Panc1 (cell line): ENCODE measurements at regions of chr17 and their contacts with region 1.

Region 1: GRCh38 chr17:76547184-76547641 is 7.4 kb downstream of the PRCD start:
- DNase-seq: no peak
- ATAC-seq: peak; percentile 86
- H3K4me3 ChIP-seq: no peak overlapping the region
- H3K27ac ChIP-seq: peak overlapping the region; percentile 36; the same call in 1 of the 2 replicates
- H3K4me1 ChIP-seq: peaks cover 32% of the 10 kb centered on the region
- H3K27me3 ChIP-seq: no peaks in the 10 kb centered on the region
- CTCF ChIP-seq: peak; percentile 92

Region 2: GRCh38 chr17:76246080-76247066 is 300.8 kb before region 1 on chr17:
- CTCF ChIA-PET with region 1: no interaction called
- POLR2A ChIA-PET with region 1: no interaction called
- in situ Hi-C with region 1: no loop called
- intact Hi-C with region 1: no loop called
- DNase-seq: no peak
- ATAC-seq: peak; percentile 44; the same call in 1 of the 2 replicates
- H3K4me3 ChIP-seq: no peak overlapping the region
- H3K27ac ChIP-seq: no peak overlapping the region
- H3K4me1 ChIP-seq: no peaks in the 10 kb centered on the region; the same call in 1 of the 2 replicates
- H3K27me3 ChIP-seq: peaks cover 2% of the 10 kb centered on the region; the same call in 1 of the 2 replicates
- CTCF ChIP-seq: no peak

Region 3: DNA sequence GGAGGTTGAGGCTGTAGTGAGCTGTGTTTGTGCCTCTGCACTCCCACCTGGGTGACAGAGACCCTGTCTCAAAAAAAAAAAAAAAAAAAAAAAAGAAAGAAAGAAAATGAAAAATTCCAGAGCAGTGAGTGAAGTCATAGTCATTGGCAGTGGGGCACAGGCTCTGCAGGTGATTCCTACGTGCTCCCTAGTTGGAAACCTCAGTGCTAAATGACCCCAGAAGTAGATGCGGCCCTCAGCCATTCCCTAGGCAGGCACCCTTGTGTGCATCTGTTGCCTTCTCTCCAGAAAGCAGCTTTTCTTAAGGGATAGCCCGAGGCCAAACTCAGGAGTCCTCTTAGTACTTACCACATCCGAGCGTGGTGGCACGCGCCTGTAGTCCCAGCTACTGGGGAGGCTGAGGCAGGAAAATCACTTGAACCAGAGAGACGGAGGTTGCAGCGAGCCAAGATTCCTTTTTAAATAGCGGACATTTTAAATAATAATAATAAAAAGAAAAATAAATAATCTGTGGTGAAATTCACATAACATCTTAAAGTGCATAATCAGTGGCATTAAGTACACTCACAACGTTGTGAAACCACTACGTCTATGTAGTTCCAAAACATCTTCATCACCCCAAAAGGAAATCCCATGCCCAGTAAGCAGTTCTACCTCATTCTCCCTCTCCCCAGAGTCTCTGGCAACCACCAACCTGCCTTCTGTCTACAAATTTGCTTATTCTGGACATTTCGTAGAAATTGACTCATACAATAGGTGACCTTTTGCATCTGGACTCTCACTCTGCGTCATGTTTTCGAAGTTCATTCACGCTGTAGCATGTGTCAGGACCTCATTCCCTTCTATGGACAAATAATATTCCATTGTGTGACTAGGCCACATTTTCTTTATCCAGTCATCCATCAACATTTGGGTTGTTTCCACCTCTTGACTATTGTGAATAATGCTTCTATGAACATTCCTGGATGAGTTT is 175.3 kb before region 1 on chr17:
- CTCF ChIA-PET with region 1: no interaction called
- POLR2A ChIA-PET with region 1: no interaction called
- in situ Hi-C with region 1: no loop called
- intact Hi-C with region 1: no loop called
- DNase-seq: no peak
- ATAC-seq: no peak
- H3K4me3 ChIP-seq: no peak overlapping the region
- H3K27ac ChIP-seq: no peak overlapping the region
- H3K4me1 ChIP-seq: no peaks in the 10 kb centered on the region
- H3K27me3 ChIP-seq: no peaks in the 10 kb centered on the region
- CTCF ChIP-seq: no peak

Region 4: DNA sequence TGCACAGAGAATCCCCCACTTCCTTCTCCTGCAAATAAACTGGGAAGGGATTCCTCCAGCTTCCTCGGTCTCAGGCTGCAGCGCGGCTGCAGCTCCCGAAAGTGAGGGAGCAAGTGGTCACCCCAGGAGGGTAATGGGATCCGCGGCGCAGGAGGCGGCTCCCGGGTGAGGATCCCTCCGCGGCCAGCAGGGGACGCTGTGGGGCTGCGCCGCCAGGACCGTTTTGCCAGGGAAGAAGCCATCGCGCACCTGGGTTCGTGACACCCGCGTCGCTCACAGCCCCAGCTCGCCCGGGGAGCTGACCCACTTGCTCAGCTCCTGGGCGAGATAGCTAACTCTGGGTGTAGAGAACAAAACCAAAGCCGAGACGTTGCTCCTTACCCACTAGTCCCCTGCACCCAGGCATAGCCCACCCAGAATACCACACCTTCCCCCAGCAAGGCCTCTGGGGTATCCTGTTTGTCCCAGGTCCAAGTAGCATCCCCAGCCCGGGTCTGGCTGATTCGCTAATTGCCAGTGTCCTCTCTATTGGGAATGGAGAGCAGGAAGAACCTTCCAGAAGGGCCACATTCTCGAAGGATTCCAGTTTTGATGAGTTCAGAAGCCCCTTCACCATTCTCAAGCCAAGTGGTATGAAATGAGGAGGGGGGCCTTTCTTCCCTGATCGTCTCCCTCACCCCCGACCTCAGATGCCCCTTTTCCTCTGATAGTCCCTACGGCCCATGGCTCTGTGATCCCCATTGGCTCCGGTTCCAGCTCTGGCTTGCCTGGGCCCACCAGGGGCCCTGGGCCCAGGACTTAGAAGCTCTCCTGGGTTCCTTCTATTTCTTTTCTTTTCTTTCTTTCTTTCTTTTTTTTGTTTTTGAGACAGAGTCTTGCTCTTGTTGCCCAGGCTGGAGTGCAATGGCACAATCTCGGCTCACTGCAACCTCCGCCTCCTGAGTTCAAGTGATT is 23.9 kb before region 1 on chr17:
- CTCF ChIA-PET with region 1: interaction called, 11 read pairs
- POLR2A ChIA-PET with region 1: interaction called, 4 read pairs
- in situ Hi-C with region 1: no loop called
- intact Hi-C with region 1: loop called (anchors 1 kb)
- DNase-seq: peak; percentile 46
- ATAC-seq: peak; percentile 85
- H3K4me3 ChIP-seq: peak overlapping the region in 1 of 2 experiments; percentile 17; a peak in 1 of 4 replicates
- H3K27ac ChIP-seq: no peak overlapping the region
- H3K4me1 ChIP-seq: peaks cover 19% of the 10 kb centered on the region
- H3K27me3 ChIP-seq: no peaks in the 10 kb centered on the region
- CTCF ChIP-seq: peak; percentile 100

Region 5: DNA sequence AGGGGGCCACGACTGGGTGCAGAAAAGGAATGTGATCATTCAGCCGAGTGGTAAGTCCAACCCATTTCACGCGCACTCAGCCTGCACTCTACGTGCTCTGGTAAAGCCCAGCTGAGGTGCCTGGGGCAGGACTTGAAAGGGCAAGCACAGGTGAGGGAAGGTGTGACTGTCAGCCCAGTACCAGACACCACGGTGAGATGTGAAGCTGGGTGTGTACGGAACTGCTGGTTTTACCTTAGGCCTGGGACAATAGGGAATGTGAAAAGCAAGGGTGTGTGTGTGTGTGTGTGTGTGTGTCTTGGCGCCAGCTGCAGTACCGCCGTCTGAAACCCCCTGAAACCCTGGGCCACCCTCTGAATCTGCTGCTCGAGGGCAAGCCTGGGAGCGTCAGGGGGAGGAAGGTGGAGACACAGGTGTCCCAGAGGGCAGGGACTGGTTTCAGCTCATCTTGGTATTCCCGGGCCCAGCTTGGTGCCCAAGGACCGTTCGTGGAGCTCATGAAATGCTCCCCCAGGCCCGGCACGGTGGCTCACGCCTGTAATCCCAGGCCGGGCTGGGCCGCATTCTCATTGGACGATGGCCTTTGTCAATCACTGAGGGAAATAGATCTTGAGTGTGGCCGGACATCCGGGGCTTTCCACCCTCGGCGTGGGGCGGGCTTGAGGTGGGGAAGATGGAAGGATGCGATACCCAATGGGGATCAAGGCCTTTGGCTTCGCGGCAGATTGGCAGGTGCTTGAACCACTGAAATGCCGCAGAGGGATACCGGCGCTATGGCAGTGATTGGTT is 124.1 kb after region 1 on chr17:
- CTCF ChIA-PET with region 1: interaction called, 10 read pairs
- POLR2A ChIA-PET with region 1: no interaction called
- in situ Hi-C with region 1: no loop called
- intact Hi-C with region 1: no loop called
- DNase-seq: peak; percentile 97
- ATAC-seq: peak; percentile 99
- H3K4me3 ChIP-seq: peak overlapping the region; percentile 82 to 94
- H3K27ac ChIP-seq: peak overlapping the region; percentile 99
- H3K4me1 ChIP-seq: peaks cover 16% of the 10 kb centered on the region
- H3K27me3 ChIP-seq: no peaks in the 10 kb centered on the region
- CTCF ChIP-seq: no peak